Posterior cingulate gyrus (tissue), 11 donors: ENCODE measurements at regions of chr20 and their contacts with region 1.

Region 1: DNA sequence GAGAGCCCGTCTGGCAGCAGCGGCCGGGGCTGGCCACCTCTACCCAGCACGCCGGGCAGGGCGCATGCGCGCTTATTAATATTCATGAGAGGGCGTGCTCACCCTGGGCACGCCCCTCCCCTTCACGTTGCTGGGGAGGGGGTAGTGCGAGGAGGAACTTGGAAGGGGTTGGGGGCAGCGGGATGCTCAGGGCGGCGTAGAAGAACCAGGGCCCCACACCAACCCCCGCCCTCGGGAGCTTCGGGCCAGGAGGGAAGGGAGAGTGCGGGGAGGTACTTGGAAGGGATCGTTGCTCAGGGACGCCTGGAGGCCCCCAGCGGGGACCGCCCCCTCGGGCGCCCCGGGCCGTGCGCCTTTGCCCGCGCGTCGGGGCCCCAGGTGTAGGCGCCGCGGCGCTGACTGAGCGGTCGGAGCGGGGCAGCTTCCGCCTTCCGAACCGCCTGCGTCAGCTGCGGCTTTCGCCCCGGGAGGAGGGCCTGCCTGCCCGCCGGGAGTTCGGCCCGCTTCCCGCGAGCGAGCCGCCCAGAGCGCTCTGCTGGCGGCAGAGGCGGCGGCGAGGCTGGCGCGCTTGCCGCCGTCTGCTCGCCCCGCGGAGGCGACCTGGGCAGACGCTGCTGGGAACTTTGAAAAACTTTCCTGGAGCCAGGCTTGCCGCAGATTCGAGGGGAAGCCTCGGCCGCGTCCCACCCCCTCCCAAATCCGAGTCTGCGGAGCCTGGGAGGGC is at the start of gene JAG1:
- DNase-seq: peak; percentile 84 to 99 (median 93)

Region 2: GRCh38 chr20:10434467-10434831 is 239.7 kb before region 1 on chr20:
- intact Hi-C with region 1: loop called (anchors 2 kb)
- DNase-seq: peak; percentile 86 to 98 (median 91)

Region 3: GRCh38 chr20:10769700-10770099 is 95.5 kb after region 1 on chr20:
- intact Hi-C with region 1: no loop called
- DNase-seq: no peak